PC-9 (cell line): ENCODE measurements at regions of chr7 and their contacts with region 1.

Region 1: GRCh38 chr7:5488286-5488878 is 64.7 kb upstream of the TNRC18 start:
- DNase-seq: no peak
- H3K4me3 ChIP-seq: no peak overlapping the region
- H3K27ac ChIP-seq: no peak overlapping the region
- H3K4me1 ChIP-seq: 0 out of 2 replicates have a peak, but pooled peaks cover 5% of the 10 kb centered on the region
- H3K27me3 ChIP-seq: no peaks in the 10 kb centered on the region
- CTCF ChIP-seq: no peak

Region 2: GRCh38 chr7:5437348-5437892 is 51.0 kb before region 1 on chr7:
- CTCF ChIA-PET with region 1: no interaction called
- POLR2A ChIA-PET with region 1: interaction called, 15 read pairs
- intact Hi-C with region 1: no loop called
- DNase-seq: no peak
- H3K4me3 ChIP-seq: no peak overlapping the region
- H3K27ac ChIP-seq: no peak overlapping the region
- H3K4me1 ChIP-seq: no peaks in the 10 kb centered on the region
- H3K27me3 ChIP-seq: no peaks in the 10 kb centered on the region
- CTCF ChIP-seq: no peak

Region 3: GRCh38 chr7:5838761-5839500 is 350.5 kb after region 1 on chr7:
- CTCF ChIA-PET with region 1: no interaction called
- POLR2A ChIA-PET with region 1: no interaction called
- intact Hi-C with region 1: no loop called
- DNase-seq: no peak
- H3K4me3 ChIP-seq: no peak overlapping the region
- H3K27ac ChIP-seq: no peak overlapping the region
- H3K4me1 ChIP-seq: no peaks in the 10 kb centered on the region
- H3K27me3 ChIP-seq: no peaks in the 10 kb centered on the region
- CTCF ChIP-seq: no peak